ENCODE measurements at regions of chr1 and their contacts with region 1.

Region 1: GRCh38 chr1:20640183-20640597 is 6.9 kb downstream of the PINK1 start:
- DNase-seq: peak; percentile 70 to 78 (median 74)
- ATAC-seq: peak; percentile 90
- H3K4me3 ChIP-seq: no peak overlapping the region
- H3K27ac ChIP-seq: no peak overlapping the region
- H3K4me1 ChIP-seq: peaks cover 0 to 8% of the 10 kb centered on the region in 2 experiments; a peak in 2 of 5 replicates
- H3K27me3 ChIP-seq: peaks cover 2 to 10% of the 10 kb centered on the region in 2 experiments; a peak in 3 of 5 replicates
- CTCF ChIP-seq: peak; percentile 89 to 97 (median 92)
- EP300 ChIP-seq: no peak
- POLR2A ChIP-seq: no peak
- RAD21 ChIP-seq: peak; percentile 79 to 86

Region 2: DNA sequence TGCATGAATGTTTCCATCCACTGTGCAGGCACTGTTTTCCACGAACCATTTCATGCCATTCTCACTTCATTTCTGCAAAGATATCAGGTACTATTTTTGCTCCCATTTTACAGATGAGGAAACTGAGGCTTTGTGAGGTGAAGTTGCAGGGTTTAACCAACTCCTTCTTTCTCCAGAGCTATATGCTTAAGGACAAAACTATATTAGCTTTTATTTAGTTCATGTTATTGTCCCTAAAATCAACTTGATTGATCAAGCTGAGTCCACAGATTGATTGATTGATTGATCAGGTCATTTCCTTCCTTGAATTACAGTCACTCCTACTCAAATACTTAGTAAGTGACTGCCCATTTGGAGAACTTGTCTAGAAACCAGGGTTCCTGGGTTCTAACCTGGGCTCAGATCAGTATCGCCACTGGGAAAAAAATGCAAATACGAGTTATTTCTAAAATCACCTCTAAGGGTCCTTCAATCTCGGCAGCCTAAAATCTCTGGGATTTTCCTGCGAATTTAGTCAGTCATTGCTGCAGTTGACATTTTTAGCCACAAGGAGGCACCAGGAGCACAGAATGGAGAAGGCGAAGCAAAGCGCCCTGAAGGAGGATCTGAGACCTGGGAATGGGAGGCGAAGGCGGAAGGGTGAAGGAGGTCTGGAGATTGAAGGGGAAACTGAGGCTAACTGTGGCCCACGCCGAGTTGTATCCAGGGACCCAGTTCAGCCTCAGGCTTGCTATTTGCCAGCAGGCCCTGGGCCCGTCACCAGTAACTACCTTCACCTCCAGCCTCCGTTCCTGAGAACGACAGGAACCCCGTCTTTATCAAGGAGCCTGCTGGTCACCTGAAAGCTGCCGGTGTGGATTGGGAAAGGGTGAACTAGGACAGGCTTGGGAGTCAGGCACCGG is 118.0 kb before region 1 on chr1:
- CTCF ChIA-PET with region 1: interaction called, 35 read pairs
- POLR2A ChIA-PET with region 1: interaction called, 5 read pairs
- in situ Hi-C with region 1: loop called (anchors 5 kb)
- intact Hi-C with region 1: loop called (anchors 1 kb)
- DNase-seq: peak; percentile 69 to 85 (median 82)
- ATAC-seq: peak; percentile 92
- H3K4me3 ChIP-seq: no peak overlapping the region
- H3K27ac ChIP-seq: no peak overlapping the region
- H3K4me1 ChIP-seq: no peaks in the 10 kb centered on the region; a peak in 2 of 5 replicates
- H3K27me3 ChIP-seq: peaks cover 22 to 37% of the 10 kb centered on the region in 2 experiments
- CTCF ChIP-seq: peak; percentile 95 to 98 (median 95)
- EP300 ChIP-seq: no peak
- POLR2A ChIP-seq: no peak
- RAD21 ChIP-seq: peak; percentile 88 to 96

Region 3: DNA sequence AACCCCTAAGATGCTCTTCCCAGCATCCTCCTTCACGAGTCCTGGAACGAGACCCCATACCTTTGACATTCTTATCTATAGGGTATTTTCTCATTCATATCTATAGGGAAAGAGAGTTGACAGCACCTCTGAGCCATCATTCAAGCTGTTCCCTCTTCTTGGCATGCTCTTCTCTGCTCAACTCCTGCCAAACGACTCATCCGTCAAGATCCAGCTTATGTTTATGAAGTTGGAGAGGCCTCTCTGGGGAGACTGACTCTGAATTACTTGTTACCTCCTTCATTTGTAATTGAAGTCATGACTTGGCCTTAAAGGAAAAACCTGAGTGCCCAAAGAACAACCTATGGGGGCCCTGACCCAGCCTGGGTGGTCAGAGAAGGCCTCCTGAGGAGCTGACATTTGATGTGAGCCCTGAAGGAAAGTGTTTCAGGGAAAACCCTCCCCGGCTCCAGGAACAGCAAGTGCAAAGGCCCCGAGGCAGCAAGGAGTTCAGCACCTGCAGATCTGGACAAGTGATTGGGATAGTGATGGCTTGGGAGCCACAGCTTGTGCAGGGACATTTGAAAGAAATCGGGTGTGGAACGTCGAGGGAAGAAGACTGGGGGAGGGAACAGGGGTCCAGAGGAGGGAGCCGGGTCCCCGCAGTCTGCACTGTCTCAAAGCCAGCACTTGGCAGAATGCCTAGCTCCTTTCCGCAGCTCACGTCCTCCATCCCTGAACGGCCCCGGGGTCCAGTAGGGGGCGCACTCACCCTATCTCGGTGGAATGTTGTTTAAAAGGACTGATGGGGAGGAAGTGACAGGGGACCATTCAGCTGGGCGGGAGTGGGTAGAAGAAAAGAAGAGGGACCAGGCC is 65.3 kb before region 1 on chr1:
- CTCF ChIA-PET with region 1: interaction called, 17 read pairs
- POLR2A ChIA-PET with region 1: no interaction called
- in situ Hi-C with region 1: no loop called
- intact Hi-C with region 1: loop called (anchors 1 kb)
- DNase-seq: peak; percentile 90 to 91 (median 90)
- ATAC-seq: peak; percentile 98
- H3K4me3 ChIP-seq: no peak overlapping the region
- H3K27ac ChIP-seq: no peak overlapping the region
- H3K4me1 ChIP-seq: peaks cover 0 to 9% of the 10 kb centered on the region in 2 experiments; a peak in 2 of 5 replicates
- H3K27me3 ChIP-seq: peaks cover 9 to 10% of the 10 kb centered on the region in 2 experiments; a peak in 4 of 5 replicates
- CTCF ChIP-seq: peak; percentile 87 to 96 (median 93)
- EP300 ChIP-seq: no peak
- POLR2A ChIP-seq: no peak
- RAD21 ChIP-seq: peak; percentile 47 to 87; a peak in 3 of 4 replicates

Region 4: GRCh38 chr1:20654104-20654690 is 14.0 kb after region 1 on chr1:
- CTCF ChIA-PET with region 1: interaction called, 4 read pairs
- POLR2A ChIA-PET with region 1: interaction called, 12 read pairs
- in situ Hi-C with region 1: no loop called
- intact Hi-C with region 1: no loop called
- DNase-seq: no peak
- ATAC-seq: peak; percentile 50; the same call in 2 of the 3 replicates
- H3K4me3 ChIP-seq: no peak overlapping the region
- H3K27ac ChIP-seq: no peak overlapping the region
- H3K4me1 ChIP-seq: peaks cover 0 to 5% of the 10 kb centered on the region in 2 experiments; a peak in 1 of 5 replicates
- H3K27me3 ChIP-seq: no peaks in the 10 kb centered on the region
- CTCF ChIP-seq: peak in 2 of 3 experiments; percentile 23 to 31; a peak in 1 of 6 replicates
- EP300 ChIP-seq: no peak
- POLR2A ChIP-seq: no peak
- RAD21 ChIP-seq: 0 out of 4 replicates have a peak, but pooled peaks of 1 of the 2 experiments have one; percentile 7